Transverse colon (tissue), 4 donors: ENCODE measurements at regions of chr11 and their contacts with region 1.

Region 1: DNA sequence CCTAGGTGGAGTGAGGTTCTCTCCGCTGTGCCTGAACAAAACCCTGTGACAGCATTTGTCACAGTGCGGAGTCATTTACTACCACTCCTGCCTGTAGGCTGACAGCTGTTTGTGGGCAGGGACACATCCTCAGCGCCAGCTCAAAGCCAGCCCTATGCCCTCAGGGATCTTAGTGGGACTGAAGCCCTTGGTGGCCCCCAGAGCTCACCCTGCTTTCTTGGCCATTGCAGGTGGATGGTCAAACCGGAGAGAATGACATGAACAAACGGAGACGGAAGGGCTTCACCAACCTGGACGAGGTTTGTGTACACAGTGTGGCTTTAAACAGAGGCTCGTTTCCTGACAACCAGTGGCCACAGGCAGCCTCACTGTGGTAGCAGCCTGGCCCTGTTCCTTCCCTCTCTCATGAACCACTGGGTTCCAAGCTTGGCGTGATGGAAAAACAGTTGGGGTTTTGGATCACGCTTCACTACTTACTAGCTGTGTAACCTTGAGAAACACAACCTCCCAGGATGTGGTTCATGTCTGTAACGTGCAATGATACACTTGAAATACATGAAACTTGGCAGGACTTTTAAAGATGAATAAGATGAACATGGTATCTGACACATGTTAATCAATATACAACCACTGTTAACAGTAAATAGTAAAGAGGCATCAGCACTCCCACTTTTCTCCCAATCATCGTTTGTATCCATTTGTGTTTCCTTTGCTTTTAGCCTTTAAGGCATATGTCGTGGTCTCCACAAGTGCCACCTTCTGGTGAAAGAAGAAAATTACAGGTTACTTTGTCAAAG is 125.8 kb downstream of the MICAL2 start:
- DNase-seq: peak; percentile 32
- H3K4me3 ChIP-seq: no peak overlapping the region
- H3K27ac ChIP-seq: peak overlapping the region; percentile 49 to 80 (median 73)
- H3K4me1 ChIP-seq: peaks cover 10 to 42% (median 20%) of the 10 kb centered on the region in 4 donors
- H3K27me3 ChIP-seq: no peaks in the 10 kb centered on the region
- CTCF ChIP-seq: peak; percentile 58 to 83 (median 69)
- EP300 ChIP-seq: no peak
- POLR2A ChIP-seq: no peak

Region 2: GRCh38 chr11:11813288-11813962 is 422.7 kb before region 1 on chr11:
- in situ Hi-C with region 1: loop called in 1 of 4 experiments (anchors 25 kb)
- intact Hi-C with region 1: no loop called
- DNase-seq: peak; percentile 24
- H3K4me3 ChIP-seq: no peak overlapping the region
- H3K27ac ChIP-seq: peak overlapping the region; percentile 4 to 72 (median 60)
- H3K4me1 ChIP-seq: peaks cover 0 to 5% (median 1%) of the 10 kb centered on the region in 4 donors
- H3K27me3 ChIP-seq: no peaks in the 10 kb centered on the region
- CTCF ChIP-seq: no peak
- EP300 ChIP-seq: no peak
- POLR2A ChIP-seq: no peak

Region 3: GRCh38 chr11:12066799-12067508 is 169.2 kb before region 1 on chr11:
- in situ Hi-C with region 1: loop called in 3 of 4 experiments (anchors 25 kb)
- intact Hi-C with region 1: no loop called
- DNase-seq: peak; percentile 67
- H3K4me3 ChIP-seq: no peak overlapping the region
- H3K27ac ChIP-seq: peak overlapping the region; percentile 69 to 81 (median 76)
- H3K4me1 ChIP-seq: peaks cover 19 to 30% (median 29%) of the 10 kb centered on the region in 4 donors
- H3K27me3 ChIP-seq: no peaks in the 10 kb centered on the region
- CTCF ChIP-seq: no peak
- EP300 ChIP-seq: peak; percentile 54
- POLR2A ChIP-seq: no peak

Region 4: GRCh38 chr11:12110201-12110713 is 125.9 kb before region 1 on chr11 and contains the start of gene MICAL2:
- in situ Hi-C with region 1: no loop called
- intact Hi-C with region 1: loop called (anchors 10 kb)
- DNase-seq: peak; percentile 94
- H3K4me3 ChIP-seq: peak within 1 kb of the TSS; percentile 65 to 97 (median 82)
- H3K27ac ChIP-seq: peak within 1 kb of the TSS; percentile 89 to 98 (median 95)
- H3K4me1 ChIP-seq: peaks cover 12 to 42% (median 28%) of the 10 kb centered on the region in 4 donors
- H3K27me3 ChIP-seq: no peaks in the 10 kb centered on the region
- CTCF ChIP-seq: no peak
- EP300 ChIP-seq: no peak
- POLR2A ChIP-seq: peak; percentile 66
- total RNA-seq, gene MICAL2: 309 to 483 (median 316) TPM

Region 5: DNA sequence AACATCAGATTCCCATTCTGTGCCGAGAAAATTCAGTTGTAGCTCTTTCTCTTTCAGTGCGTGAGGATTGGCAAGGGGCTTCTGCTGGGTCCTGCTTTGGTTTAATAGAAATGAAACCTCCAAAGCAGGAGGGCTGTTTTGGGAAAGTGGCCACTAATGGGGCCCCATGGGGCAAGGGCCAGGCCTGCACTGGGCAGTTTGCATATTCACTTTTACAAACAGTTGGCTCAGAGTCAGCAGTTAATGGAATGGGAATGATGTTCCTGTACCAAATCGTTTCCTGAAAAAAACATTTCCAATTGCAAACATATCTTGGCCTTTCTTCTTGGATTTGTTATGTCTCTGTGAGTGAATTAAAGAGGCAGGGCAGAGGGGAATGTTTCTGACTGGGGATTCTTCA is 233.3 kb after region 1 on chr11:
- in situ Hi-C with region 1: no loop called
- intact Hi-C with region 1: no loop called
- DNase-seq: no peak
- H3K4me3 ChIP-seq: no peak overlapping the region
- H3K27ac ChIP-seq: peak overlapping the region; percentile 57 to 71 (median 64)
- H3K4me1 ChIP-seq: peaks cover 4 to 24% (median 13%) of the 10 kb centered on the region in 4 donors
- H3K27me3 ChIP-seq: no peaks in the 10 kb centered on the region
- CTCF ChIP-seq: no peak
- EP300 ChIP-seq: no peak
- POLR2A ChIP-seq: no peak